ENCODE measurements at regions of chr16 and their contacts with region 1.

Region 1: GRCh38 chr16:67428146-67428731 is 2.7 kb upstream of the HSD11B2 start:
- DNase-seq: peak; percentile 80 to 88 (median 84)
- H3K4me3 ChIP-seq: no peak overlapping the region
- H3K27ac ChIP-seq: no peak overlapping the region
- H3K4me1 ChIP-seq: peaks cover 4% of the 10 kb centered on the region
- H3K27me3 ChIP-seq: no peaks in the 10 kb centered on the region
- CTCF ChIP-seq: peak; percentile 65 to 94 (median 93)
- EP300 ChIP-seq: no peak
- POLR2A ChIP-seq: no peak

Region 2: DNA sequence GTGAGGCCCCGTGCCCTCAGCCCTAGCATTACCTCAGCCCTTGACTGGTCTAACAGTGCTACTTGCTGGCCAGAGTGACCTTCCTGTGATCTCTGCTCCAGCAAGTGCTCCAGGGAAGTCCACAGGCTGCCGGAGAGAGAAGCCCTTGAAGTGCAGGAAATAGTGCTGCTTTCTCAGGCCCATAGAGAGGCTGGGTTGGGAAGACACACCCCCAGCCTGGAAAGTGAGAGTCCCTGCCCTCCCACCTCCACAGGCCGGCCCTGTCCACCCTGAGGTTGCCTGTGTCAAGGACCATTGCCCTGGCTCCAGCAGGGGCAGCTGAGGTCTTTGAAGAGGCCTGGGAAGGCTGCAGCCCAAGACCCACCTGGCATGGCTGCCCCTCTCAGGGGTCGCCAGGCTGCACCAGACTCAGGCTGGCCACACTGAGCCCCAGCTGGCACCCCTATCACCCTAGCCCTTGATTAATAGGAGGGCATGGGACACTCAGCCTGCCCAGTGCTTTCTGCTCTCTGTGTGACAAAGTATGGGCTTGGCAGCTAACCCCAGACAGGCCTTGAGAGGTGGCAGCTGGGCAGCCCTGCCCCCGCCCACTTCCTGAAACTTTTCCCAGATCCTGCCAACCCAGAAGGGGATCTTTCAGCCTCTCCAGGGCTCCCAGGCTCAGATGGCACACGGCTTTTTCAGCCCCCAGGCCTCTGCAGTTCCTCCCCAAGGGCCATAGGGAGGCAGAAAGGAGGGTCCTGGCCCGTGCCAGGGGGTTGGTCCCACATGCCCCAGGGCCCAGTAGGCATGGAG is 31.0 kb after region 1 on chr16:
- intact Hi-C with region 1: loop called in 3 of 4 experiments (anchors 2 to 5 kb)
- DNase-seq: peak in 1 of 5 donors; percentile 54
- H3K4me3 ChIP-seq: no peak overlapping the region
- H3K27ac ChIP-seq: peak overlapping the region; percentile 31 to 76
- H3K4me1 ChIP-seq: peaks cover 45% of the 10 kb centered on the region
- H3K27me3 ChIP-seq: no peaks in the 10 kb centered on the region
- CTCF ChIP-seq: no peak
- EP300 ChIP-seq: no peak
- POLR2A ChIP-seq: no peak

Region 3: DNA sequence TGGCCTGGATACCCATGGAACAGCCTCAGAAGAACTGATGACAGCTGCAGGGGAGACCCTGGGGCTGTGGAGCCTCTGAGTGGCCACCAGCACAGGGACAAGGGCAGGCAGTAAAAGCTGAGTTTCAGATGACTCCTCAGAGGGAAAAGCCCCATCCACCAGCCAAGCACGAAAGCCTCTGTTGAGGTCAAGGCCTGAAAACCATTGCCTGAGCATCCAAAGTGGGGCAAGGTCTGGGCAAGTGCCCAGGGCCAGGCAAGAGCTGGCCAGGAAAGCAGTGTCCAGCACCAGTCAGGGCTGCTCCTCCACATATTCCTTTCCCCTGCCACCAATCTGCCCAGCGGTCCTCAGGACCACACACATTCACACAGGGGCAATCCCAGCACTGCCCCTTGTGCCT is 36.3 kb after region 1 on chr16:
- intact Hi-C with region 1: loop called (anchors 2 to 5 kb)
- DNase-seq: no peak
- H3K4me3 ChIP-seq: no peak overlapping the region
- H3K27ac ChIP-seq: no peak overlapping the region
- H3K4me1 ChIP-seq: peaks cover 20% of the 10 kb centered on the region
- H3K27me3 ChIP-seq: no peaks in the 10 kb centered on the region
- CTCF ChIP-seq: no peak
- EP300 ChIP-seq: no peak
- POLR2A ChIP-seq: no peak